CD8-positive, alpha-beta T cell (primary cell): ENCODE measurements at regions of chr10 and their contacts with region 1.

Region 1: GRCh38 chr10:77846718-77847630 is 79.6 kb downstream of the DLG5 start:
- DNase-seq: peak; percentile 21 to 74 (median 62)
- ATAC-seq: peak; percentile 88
- H3K4me3 ChIP-seq: no peak overlapping the region
- H3K4me3 Mint-ChIP-seq: no peak overlapping the region
- H3K27ac ChIP-seq: no peak overlapping the region
- H3K27ac Mint-ChIP-seq: no peak overlapping the region
- H3K4me1 ChIP-seq: no peaks in the 10 kb centered on the region
- H3K4me1 Mint-ChIP-seq: peaks cover 6% of the 10 kb centered on the region
- H3K27me3 ChIP-seq: no peaks in the 10 kb centered on the region
- H3K27me3 Mint-ChIP-seq: no peaks in the 10 kb centered on the region
- CTCF ChIP-seq: peak; percentile 74

Region 2: GRCh38 chr10:77873536-77874380 is 26.8 kb after region 1 on chr10:
- CTCF ChIA-PET with region 1: interaction called, 4 read pairs
- POLR2A ChIA-PET with region 1: no interaction called
- intact Hi-C with region 1: loop called in 1 of 2 experiments (anchors 1 kb)
- DNase-seq: peak in 8 of 9 experiments; percentile 25 to 68 (median 45)
- ATAC-seq: peak; percentile 34
- H3K4me3 ChIP-seq: peak overlapping the region in 1 of 2 experiments; percentile 3
- H3K4me3 Mint-ChIP-seq: peak overlapping the region; percentile 22
- H3K27ac ChIP-seq: peak overlapping the region; percentile 26 to 60
- H3K27ac Mint-ChIP-seq: peak overlapping the region; percentile 89
- H3K4me1 ChIP-seq: peaks cover 32% of the 10 kb centered on the region
- H3K4me1 Mint-ChIP-seq: peaks cover 32% of the 10 kb centered on the region
- H3K27me3 ChIP-seq: no peaks in the 10 kb centered on the region
- H3K27me3 Mint-ChIP-seq: peaks cover 4% of the 10 kb centered on the region
- CTCF ChIP-seq: no peak

Region 3: DNA sequence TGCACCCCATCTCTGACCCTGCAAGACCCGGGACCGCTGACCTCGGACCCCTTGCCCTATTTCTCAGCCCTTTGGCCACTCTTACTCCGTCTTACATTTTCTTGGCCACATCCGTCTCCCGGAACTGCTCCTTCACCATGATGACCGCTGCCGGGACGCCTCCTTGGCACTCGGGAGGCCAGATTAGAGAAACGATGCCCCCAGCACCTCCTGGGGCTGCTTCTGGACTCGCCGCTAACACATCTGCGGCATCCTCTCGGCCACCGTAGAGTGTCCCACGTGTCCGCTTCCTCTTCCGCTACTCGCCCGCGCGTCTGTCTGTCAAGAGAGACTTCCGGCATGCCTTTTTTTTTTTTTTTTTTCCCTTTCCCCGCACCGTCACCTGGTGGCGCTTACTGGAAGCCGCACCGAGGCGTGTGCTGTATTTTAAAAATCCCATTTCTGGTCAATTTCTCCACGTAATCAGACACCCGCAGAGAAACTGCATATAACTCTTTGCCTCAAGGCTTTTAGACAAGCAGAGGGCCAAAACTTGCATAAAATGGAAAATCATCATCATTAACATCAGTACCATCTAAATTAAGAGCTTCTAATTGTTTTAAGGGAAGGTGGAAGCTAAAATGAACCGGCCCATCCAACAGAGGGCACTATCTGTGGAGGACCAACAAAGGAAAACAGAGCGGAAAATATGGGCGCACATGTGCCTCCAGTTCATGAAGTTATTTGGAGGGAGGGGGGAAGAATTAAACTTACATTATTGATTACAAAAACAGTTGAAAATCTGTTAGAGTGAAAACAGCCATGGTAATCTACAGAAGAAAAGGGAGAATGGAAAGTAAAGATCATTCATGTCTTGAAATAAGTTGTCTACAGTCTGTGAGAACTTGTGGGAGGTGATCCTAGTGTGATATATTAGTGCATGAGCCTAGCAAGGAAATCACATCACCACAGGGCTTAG is 182.6 kb after region 1 on chr10 and contains the start of gene POLR3A:
- CTCF ChIA-PET with region 1: no interaction called
- POLR2A ChIA-PET with region 1: no interaction called
- intact Hi-C with region 1: loop called in 1 of 2 experiments (anchors 10 kb)
- DNase-seq: peak; percentile 81 to 97 (median 90)
- ATAC-seq: peak; percentile 56
- H3K4me3 ChIP-seq: peak within 1 kb of the TSS; percentile 92 to 99
- H3K4me3 Mint-ChIP-seq: peak within 1 kb of the TSS; percentile 99
- H3K27ac ChIP-seq: peak within 1 kb of the TSS; percentile 55 to 70
- H3K27ac Mint-ChIP-seq: peak within 1 kb of the TSS; percentile 95
- H3K4me1 ChIP-seq: peaks cover 17% of the 10 kb centered on the region
- H3K4me1 Mint-ChIP-seq: peaks cover 40% of the 10 kb centered on the region
- H3K27me3 ChIP-seq: no peaks in the 10 kb centered on the region
- H3K27me3 Mint-ChIP-seq: no peaks in the 10 kb centered on the region
- CTCF ChIP-seq: peak; percentile 75
- total RNA-seq, gene POLR3A: 5.9 to 7.0 TPM

Region 4: GRCh38 chr10:78066012-78066411 is 219.0 kb after region 1 on chr10:
- CTCF ChIA-PET with region 1: no interaction called
- POLR2A ChIA-PET with region 1: no interaction called
- intact Hi-C with region 1: no loop called
- DNase-seq: no peak
- ATAC-seq: no peak
- H3K4me3 ChIP-seq: no peak overlapping the region
- H3K4me3 Mint-ChIP-seq: no peak overlapping the region
- H3K27ac ChIP-seq: no peak overlapping the region
- H3K27ac Mint-ChIP-seq: no peak overlapping the region
- H3K4me1 ChIP-seq: peaks cover 17% of the 10 kb centered on the region
- H3K4me1 Mint-ChIP-seq: peaks cover 14% of the 10 kb centered on the region
- H3K27me3 ChIP-seq: no peaks in the 10 kb centered on the region
- H3K27me3 Mint-ChIP-seq: no peaks in the 10 kb centered on the region
- CTCF ChIP-seq: no peak